AG04449 (cell line): ENCODE measurements at regions of chr1 and their contacts with region 1.

Region 1: GRCh38 chr1:34013958-34014737 is 150.3 kb downstream of the HMGB4 start:
- DNase-seq: no peak
- H3K4me3 ChIP-seq: no peak overlapping the region
- CTCF ChIP-seq: peak; percentile 69

Region 2: DNA sequence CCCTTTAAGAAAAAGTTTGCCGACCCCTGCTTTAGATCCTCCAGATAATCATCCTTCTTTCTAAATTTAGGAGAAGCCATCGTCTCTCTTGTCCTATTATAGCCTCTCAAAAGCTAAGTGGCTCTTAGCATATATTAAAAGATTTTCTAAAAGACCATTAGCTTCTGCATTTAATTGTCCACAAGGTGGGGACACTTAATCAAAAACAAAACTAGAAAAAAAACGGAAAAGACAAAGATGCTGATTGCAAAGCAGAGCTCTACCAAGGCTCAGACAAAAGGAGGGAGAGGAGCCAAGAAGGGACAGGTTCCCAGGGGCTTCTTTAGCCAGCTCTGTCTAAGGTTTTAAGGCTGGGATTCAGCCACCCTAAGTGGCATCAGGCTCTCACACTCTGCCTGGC is 278.5 kb before region 1 on chr1:
- CTCF ChIA-PET with region 1: interaction called, 14 read pairs
- POLR2A ChIA-PET with region 1: no interaction called
- DNase-seq: no peak
- H3K4me3 ChIP-seq: no peak overlapping the region
- CTCF ChIP-seq: peak; percentile 3

Region 3: GRCh38 chr1:33997127-33998036 is 16.8 kb before region 1 on chr1:
- CTCF ChIA-PET with region 1: interaction called, 25 read pairs
- POLR2A ChIA-PET with region 1: no interaction called
- DNase-seq: no peak
- H3K4me3 ChIP-seq: no peak overlapping the region
- CTCF ChIP-seq: no peak

Region 4: GRCh38 chr1:34002810-34003209 is 11.3 kb before region 1 on chr1:
- CTCF ChIA-PET with region 1: interaction called, 25 read pairs
- POLR2A ChIA-PET with region 1: no interaction called
- DNase-seq: no peak
- H3K4me3 ChIP-seq: no peak overlapping the region
- CTCF ChIP-seq: no peak

Region 5: GRCh38 chr1:34024485-34024884 is 10.3 kb after region 1 on chr1:
- CTCF ChIA-PET with region 1: interaction called, 32 read pairs
- POLR2A ChIA-PET with region 1: no interaction called
- DNase-seq: no peak
- H3K4me3 ChIP-seq: no peak overlapping the region
- CTCF ChIP-seq: no peak

Region 6: DNA sequence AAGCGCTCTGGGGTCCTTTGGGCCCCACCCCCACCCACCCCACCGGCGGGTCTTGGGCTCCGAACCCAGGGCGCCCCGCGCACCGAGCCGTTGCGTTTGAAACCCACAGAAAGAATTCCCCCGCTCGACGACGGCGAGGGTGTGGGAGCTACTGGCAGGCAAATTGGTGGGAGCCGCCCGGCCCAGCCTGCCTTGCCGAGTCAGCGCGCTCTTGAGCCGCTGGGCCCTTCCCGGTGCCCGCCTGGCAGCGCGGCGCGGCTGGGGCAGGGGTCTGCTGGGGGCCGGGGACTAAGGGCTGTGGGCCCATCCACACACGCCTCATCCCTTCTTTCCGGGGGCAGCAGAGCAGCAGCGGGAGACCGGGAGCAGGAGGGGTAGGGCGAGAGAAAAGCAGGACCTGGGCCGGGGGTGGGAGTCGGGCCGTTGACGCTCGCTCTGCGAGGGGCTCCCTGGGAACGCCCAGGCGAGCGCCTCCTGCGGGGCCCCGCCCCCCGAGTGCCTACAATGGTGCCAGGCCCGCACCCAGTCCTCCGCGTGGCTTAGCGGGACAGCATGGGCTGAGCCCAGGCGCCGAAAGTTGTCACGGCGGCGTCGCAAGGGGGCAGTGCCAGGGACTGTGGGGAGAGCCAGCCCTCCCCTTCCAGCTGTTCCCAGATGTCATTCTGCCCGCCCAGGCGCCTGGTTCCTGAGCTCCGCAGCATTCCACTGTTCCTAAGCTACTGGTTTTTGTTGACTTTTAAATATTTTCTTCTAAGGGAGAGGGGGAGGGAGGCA is 162.9 kb after region 1 on chr1 and contains the start of gene C1orf94:
- CTCF ChIA-PET with region 1: no interaction called
- POLR2A ChIA-PET with region 1: no interaction called
- DNase-seq: no peak
- H3K4me3 ChIP-seq: no peak within 1 kb of the TSS
- CTCF ChIP-seq: no peak